ENCODE measurements at regions of chr11 and their contacts with region 1.

Region 1: GRCh38 chr11:64652586-64653387 is 61.8 kb downstream of the SLC22A12 start:
- DNase-seq: peak; percentile 71 to 77 (median 76)
- H3K4me3 ChIP-seq: no peak overlapping the region
- H3K27ac ChIP-seq: no peak overlapping the region
- H3K4me1 ChIP-seq: peaks cover 0 to 55% (median 45%) of the 10 kb centered on the region in 4 experiments
- H3K27me3 ChIP-seq: no peaks in the 10 kb centered on the region

Region 2: DNA sequence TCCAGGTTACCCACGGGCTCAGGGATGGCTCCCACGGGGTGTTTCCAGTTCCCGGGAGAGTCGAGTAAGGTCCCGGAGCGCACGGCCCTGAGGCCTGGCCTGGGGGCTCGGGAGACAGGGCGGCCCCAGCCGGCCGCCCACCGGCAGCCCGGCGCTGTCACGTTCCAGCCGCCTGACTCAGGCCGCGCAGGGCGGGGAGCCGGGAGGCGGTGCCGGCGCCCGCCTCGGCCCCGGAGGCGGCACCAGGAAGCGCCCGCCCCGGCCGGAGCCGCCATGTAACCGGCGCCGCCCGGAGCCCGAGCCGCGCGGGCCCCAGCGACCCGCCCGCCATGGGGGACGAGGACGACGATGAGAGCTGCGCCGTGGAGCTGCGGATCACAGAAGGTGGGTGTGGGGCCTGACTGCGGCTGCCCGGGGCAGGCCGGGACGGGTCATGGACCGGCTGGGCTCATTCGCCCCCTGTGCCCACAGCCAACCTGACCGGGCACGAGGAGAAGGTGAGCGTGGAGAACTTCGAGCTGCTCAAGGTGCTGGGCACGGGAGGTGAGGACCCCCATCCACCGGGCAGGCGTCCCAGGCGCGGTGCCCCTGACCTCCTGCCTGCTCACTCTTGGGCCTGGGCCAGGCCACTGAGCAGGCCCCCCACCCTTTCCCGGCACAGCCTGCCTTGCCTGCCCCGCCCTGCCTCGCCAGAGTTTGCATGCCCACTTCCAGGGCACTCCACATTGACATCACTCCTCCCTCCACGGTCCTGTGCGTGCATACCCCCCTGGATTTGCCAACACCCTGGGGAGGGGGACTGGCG is 293.7 kb before region 1 on chr11 and contains the start of gene RPS6KA4:
- CTCF ChIA-PET with region 1: interaction called, 11 read pairs
- POLR2A ChIA-PET with region 1: no interaction called
- DNase-seq: peak in 2 of 3 donors; percentile 48 to 63
- H3K4me3 ChIP-seq: peak within 1 kb of the TSS; percentile 52 to 86 (median 75)
- H3K27ac ChIP-seq: peak within 1 kb of the TSS in 1 of 2 experiments; percentile 70
- H3K4me1 ChIP-seq: peaks cover 2 to 82% (median 51%) of the 10 kb centered on the region in 4 experiments
- H3K27me3 ChIP-seq: no peaks in the 10 kb centered on the region

Region 3: DNA sequence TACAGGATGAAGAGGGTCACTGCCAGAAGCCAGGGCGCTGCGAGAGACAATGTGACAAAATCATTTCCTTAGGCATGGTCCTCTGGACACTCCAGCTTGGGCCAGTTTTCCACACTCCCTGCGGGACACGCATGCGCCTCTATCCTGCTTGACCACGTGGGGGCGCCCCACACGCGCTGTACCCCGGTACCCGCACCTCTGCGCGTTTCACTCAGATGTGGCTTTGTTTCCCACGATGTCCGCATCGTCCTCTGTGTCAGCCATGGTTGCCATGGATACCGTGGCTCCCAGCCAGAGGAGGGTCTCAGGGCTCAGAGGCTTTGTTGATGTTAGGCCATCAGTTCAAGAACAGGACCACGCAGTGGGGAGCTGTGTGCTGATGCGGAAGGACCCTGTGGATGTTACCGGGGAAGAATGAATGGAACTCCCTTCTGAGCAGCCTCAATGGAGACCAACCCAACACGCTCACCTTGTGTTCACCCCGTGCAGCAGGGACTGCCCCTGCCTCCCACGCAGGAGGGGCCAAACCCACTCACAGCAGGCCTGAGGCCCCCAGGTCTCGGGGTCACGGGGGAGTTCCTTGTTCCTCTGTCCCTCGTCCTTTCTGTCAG is 162.9 kb before region 1 on chr11:
- CTCF ChIA-PET with region 1: interaction called, 146 read pairs
- POLR2A ChIA-PET with region 1: interaction called, 3 read pairs
- DNase-seq: peak; percentile 51 to 65 (median 64)
- H3K4me3 ChIP-seq: no peak overlapping the region
- H3K27ac ChIP-seq: no peak overlapping the region
- H3K4me1 ChIP-seq: peaks cover 0 to 19% (median 19%) of the 10 kb centered on the region in 4 experiments
- H3K27me3 ChIP-seq: no peaks in the 10 kb centered on the region

Region 4: GRCh38 chr11:64638018-64638665 is 14.6 kb before region 1 on chr11:
- CTCF ChIA-PET with region 1: interaction called, 68 read pairs
- POLR2A ChIA-PET with region 1: no interaction called
- DNase-seq: no peak
- H3K4me3 ChIP-seq: no peak overlapping the region
- H3K27ac ChIP-seq: no peak overlapping the region
- H3K4me1 ChIP-seq: peaks cover 0 to 27% (median 22%) of the 10 kb centered on the region in 4 experiments
- H3K27me3 ChIP-seq: peaks cover 7 to 37% (median 17%) of the 10 kb centered on the region in 5 experiments

Region 5: DNA sequence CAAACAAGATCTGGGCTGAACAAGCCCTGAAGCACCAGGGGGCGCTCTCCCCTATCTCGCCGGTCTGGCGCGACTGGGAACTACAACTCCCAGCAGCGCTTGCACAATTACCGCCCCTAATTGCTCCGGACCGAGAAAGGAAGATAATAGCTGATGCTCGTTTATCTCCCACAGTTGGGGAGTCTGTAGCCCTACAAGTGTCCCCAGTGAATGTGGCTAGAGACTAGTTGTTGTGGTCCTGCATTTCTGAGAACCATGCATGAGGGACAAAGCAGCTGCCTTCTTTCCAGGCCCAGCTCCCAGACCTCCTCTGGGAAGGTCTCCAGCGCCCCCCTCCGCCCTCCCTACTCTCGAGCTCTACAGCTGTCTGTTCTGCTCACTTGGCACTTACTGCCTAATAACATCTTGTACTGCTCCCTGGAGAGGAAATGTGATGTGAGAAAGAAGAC is 35.8 kb after region 1 on chr11:
- CTCF ChIA-PET with region 1: interaction called, 32 read pairs
- POLR2A ChIA-PET with region 1: no interaction called
- DNase-seq: peak; percentile 93 to 96 (median 95)
- H3K4me3 ChIP-seq: peak overlapping the region; percentile 35 to 79 (median 58)
- H3K27ac ChIP-seq: no peak overlapping the region
- H3K4me1 ChIP-seq: peaks cover 3 to 58% (median 36%) of the 10 kb centered on the region in 4 experiments
- H3K27me3 ChIP-seq: peaks cover 0 to 6% (median 0%) of the 10 kb centered on the region in 5 experiments